Activated naive CD4-positive, alpha-beta T cell treated with anti-CD3 and anti-CD28 coated beads for 36 hours (primary cell): ENCODE measurements at regions of chrX and their contacts with region 1.

Region 1: DNA sequence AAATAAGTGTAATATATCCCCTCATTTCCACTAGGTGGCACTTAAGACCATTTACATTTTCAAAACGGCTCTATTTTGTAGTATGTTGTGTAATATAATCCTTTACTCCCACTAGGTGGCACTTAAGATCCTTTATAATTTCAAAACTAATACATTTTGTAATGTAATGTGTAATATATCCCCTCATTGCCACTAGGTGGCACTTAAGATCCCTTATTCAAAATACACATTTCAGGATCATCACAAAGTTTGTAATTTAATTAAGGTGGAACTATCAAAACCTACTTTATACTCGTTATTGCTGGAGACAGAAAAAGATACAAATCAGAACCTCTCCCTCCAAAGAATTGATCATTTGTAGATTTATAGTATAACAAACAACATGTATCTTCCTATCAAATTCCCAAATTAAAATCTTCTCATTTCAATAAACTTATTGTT is 132.5 kb downstream of the ARHGAP6 start:
- DNase-seq: no peak
- H3K4me3 Mint-ChIP-seq: no peak overlapping the region
- H3K27ac Mint-ChIP-seq: no peak overlapping the region
- H3K4me1 Mint-ChIP-seq: no peaks in the 10 kb centered on the region
- H3K27me3 Mint-ChIP-seq: no peaks in the 10 kb centered on the region

Region 2: GRCh38 chrX:11143931-11144678 is 389.1 kb before region 1 on chrX:
- CTCF ChIA-PET with region 1: no interaction called
- intact Hi-C with region 1: loop called (anchors 1 kb)
- DNase-seq: peak; percentile 66
- H3K4me3 Mint-ChIP-seq: no peak overlapping the region
- H3K27ac Mint-ChIP-seq: no peak overlapping the region
- H3K4me1 Mint-ChIP-seq: peaks cover 2% of the 10 kb centered on the region
- H3K27me3 Mint-ChIP-seq: peaks cover 5% of the 10 kb centered on the region

Region 3: DNA sequence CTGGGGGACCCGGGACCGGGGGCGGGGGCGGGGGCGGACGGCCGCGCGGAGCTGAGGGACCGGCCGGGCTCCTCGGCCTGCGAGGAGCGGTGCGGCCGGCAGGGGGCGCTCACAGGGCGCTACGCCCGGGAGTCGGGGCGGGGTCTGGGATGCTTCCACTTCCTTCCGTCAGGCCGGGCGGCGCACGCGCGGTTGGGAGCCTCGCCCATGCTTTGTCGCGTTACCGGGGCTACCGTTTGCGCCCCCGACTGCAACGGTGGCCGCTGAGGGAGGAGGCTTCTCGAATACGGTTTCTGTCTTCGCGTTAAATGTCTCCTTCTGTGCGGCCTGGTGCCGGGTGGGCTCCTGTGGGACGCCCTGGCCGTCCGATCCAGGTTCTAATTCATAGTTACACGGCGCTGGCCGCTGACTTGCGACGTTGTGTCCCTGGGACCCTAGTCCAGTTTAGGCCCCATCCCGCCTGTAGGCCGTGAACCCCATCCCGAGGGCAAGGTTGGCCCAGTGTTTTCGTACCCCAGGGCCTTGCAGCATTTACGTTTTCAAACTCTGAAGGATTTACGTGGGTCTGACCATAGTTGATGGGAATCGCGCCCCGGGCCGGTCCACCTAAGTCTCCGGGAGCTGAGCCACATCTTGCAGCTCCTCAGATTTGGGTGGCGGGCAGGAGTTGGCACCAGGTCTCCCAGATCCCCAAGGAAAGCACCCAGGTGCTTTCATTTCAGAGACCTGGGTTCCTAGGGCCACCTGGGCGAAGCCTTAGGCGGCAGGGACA is 225.4 kb after region 1 on chrX:
- CTCF ChIA-PET with region 1: interaction called, 3 read pairs
- intact Hi-C with region 1: loop called (anchors 1 kb)
- DNase-seq: peak; percentile 89
- H3K4me3 Mint-ChIP-seq: peak overlapping the region; percentile 94
- H3K27ac Mint-ChIP-seq: peak overlapping the region; percentile 100
- H3K4me1 Mint-ChIP-seq: peaks cover 20% of the 10 kb centered on the region
- H3K27me3 Mint-ChIP-seq: no peaks in the 10 kb centered on the region

Region 4: DNA sequence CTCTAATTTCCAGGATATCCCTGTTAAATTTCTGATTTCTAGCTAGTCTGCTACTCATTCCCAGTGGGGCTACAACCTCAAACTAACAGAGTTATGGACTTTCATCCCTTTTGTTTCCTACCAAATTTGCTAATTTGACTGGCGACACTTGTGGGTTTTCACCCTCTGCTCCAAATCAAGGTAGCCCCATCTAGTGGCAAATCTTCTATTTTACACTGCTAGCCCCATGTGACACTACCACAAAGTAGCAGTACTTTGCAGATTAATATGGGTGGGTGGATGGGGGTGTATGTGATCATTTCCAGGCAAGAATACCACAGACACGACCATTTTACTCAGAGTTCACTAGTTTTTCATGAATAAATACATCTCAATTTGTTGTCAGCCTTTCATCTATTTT is 375.1 kb after region 1 on chrX:
- CTCF ChIA-PET with region 1: no interaction called
- intact Hi-C with region 1: loop called (anchors 1 kb)
- DNase-seq: peak; percentile 48
- H3K4me3 Mint-ChIP-seq: no peak overlapping the region
- H3K27ac Mint-ChIP-seq: no peak overlapping the region
- H3K4me1 Mint-ChIP-seq: peaks cover 3% of the 10 kb centered on the region
- H3K27me3 Mint-ChIP-seq: no peaks in the 10 kb centered on the region

Region 5: GRCh38 chrX:11929476-11929875 is 396.2 kb after region 1 on chrX:
- CTCF ChIA-PET with region 1: no interaction called
- intact Hi-C with region 1: no loop called
- DNase-seq: no peak
- H3K4me3 Mint-ChIP-seq: no peak overlapping the region
- H3K27ac Mint-ChIP-seq: no peak overlapping the region
- H3K4me1 Mint-ChIP-seq: no peaks in the 10 kb centered on the region
- H3K27me3 Mint-ChIP-seq: no peaks in the 10 kb centered on the region

Region 6: GRCh38 chrX:12701628-12702027 is 1168.4 kb after region 1 on chrX:
- CTCF ChIA-PET with region 1: no interaction called
- intact Hi-C with region 1: loop called (anchors 1 kb)
- DNase-seq: peak; percentile 58
- H3K4me3 Mint-ChIP-seq: no peak overlapping the region
- H3K27ac Mint-ChIP-seq: no peak overlapping the region
- H3K4me1 Mint-ChIP-seq: peaks cover 2% of the 10 kb centered on the region
- H3K27me3 Mint-ChIP-seq: no peaks in the 10 kb centered on the region